Adrenal gland (tissue), 19 donors: ENCODE measurements at regions of chr16 and their contacts with region 1.

Region 1: DNA sequence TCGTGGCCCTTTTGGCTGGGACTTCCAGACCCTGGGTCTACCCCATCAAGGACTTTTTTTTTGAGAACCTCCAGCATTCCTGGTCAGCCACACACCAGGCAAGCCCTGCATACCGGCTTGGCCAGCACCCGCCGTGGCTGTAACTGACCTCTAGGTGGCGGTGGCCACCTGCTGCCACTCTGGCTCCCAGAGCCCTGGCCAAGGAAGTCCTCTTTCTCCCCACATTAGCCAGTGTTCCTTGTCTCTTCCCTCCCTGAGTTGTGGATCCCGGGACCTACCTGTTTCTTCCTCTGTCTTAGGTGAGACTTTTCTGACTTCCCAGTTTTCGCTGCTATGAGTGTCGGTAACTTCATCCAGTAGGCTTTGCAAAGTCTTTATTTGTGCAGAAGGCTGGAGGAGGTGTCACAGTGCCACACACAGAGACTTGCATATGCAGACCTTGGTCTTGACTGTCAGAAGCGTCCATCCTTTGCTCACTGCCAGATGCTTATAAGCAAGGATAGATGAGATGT is 348.3 kb downstream of the CPPED1 start:
- DNase-seq: peak; percentile 33 to 79 (median 64)
- H3K4me3 ChIP-seq: no peak overlapping the region
- H3K27ac ChIP-seq: no peak overlapping the region
- H3K4me1 ChIP-seq: no peaks in the 10 kb centered on the region
- H3K27me3 ChIP-seq: no peaks in the 10 kb centered on the region
- CTCF ChIP-seq: peak; percentile 76 to 92 (median 82)
- POLR2A ChIP-seq: no peak

Region 2: DNA sequence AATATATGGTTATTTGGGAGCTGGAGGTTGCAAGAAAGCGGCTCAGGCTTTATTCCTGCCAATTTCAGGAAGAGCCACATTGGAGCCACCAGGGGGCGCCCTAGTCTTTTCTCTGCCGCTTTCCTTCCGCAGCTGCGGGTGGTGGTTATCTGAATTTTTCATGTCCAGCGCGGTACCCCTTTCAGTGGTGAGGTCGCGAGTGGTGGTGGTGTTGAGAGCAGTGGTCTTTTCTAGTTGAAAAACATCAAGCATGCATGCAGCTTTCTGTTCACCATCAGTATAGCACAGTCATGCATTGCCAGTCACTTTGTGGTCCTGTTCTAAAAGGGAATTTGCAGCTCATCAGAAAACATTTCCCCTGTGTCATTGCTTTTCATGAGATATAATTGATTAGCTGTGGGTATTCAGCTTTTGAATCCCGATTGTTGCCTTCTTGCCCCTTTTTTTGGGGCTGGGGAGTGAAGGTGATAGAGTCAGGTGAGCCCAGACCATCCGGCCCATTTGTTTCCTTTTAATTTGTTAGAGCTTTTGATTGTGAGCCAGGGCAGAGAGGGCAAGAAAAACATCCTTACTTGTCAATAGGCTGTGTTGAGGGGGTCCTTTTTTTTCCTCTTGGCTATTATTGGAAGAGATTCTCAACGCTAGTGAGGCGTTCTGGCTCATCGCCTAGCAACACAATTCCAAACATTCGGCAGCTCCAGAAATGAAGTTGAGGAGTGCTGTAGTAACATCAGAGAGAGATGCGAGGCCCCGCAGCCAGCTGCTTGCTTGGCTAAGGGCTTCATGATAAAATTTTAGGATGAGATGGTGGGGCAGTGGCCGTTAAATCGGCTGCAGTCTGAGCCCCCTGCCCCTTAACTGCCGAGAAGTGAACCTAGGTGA is 359.8 kb before region 1 on chr16:
- intact Hi-C with region 1: loop called in 1 of 2 experiments (anchors 10 kb)
- DNase-seq: peak; percentile 39 to 81 (median 71)
- H3K4me3 ChIP-seq: no peak overlapping the region
- H3K27ac ChIP-seq: no peak overlapping the region
- H3K4me1 ChIP-seq: peaks cover 0 to 32% of the 10 kb centered on the region in 2 donors
- H3K27me3 ChIP-seq: no peaks in the 10 kb centered on the region
- CTCF ChIP-seq: peak; percentile 71 to 96 (median 80)
- POLR2A ChIP-seq: no peak

Region 3: DNA sequence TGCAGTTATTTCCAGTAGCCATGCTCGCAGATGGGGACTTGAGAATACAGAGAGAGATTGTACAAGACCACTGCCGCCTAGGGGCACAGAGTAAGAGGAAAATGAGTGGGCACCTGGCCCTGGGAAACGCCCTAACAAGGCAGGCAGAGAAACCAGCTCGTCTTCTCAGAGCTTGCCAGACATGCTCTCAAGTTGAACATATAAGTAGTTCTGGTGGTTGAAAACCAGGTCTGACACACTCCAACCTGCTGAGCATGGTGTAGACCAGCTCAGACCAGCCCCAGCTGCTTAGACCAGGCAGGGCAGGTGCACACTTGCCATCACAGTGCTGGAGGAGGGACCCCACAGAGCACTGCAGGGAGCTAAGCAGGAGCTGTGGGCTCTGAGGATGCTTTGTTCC is 97.8 kb after region 1 on chr16:
- intact Hi-C with region 1: no loop called
- DNase-seq: no peak
- H3K4me3 ChIP-seq: no peak overlapping the region
- H3K27ac ChIP-seq: no peak overlapping the region
- H3K4me1 ChIP-seq: no peaks in the 10 kb centered on the region
- H3K27me3 ChIP-seq: no peaks in the 10 kb centered on the region
- CTCF ChIP-seq: no peak
- POLR2A ChIP-seq: no peak